ENCODE measurements at regions of chr4 and their contacts with region 1.

Region 1: GRCh38 chr4:77433418-77433733 is 172.2 kb upstream of the CXCL13 start:
- DNase-seq: peak in 6 of 9 donors; percentile 20 to 47 (median 30)
- ATAC-seq: peak; percentile 69
- H3K4me3 ChIP-seq: no peak overlapping the region
- H3K4me3 Mint-ChIP-seq: peak overlapping the region in 3 of 10 donors; percentile 19 to 46 (median 32)
- H3K27ac ChIP-seq: no peak overlapping the region
- H3K27ac Mint-ChIP-seq: no peak overlapping the region
- H3K4me1 ChIP-seq: no peaks in the 10 kb centered on the region
- H3K4me1 Mint-ChIP-seq: peaks cover 0 to 9% (median 4%) of the 10 kb centered on the region in 7 donors
- H3K27me3 ChIP-seq: no peaks in the 10 kb centered on the region
- H3K27me3 Mint-ChIP-seq: peaks cover 0 to 4% (median 0%) of the 10 kb centered on the region in 5 donors

Region 2: DNA sequence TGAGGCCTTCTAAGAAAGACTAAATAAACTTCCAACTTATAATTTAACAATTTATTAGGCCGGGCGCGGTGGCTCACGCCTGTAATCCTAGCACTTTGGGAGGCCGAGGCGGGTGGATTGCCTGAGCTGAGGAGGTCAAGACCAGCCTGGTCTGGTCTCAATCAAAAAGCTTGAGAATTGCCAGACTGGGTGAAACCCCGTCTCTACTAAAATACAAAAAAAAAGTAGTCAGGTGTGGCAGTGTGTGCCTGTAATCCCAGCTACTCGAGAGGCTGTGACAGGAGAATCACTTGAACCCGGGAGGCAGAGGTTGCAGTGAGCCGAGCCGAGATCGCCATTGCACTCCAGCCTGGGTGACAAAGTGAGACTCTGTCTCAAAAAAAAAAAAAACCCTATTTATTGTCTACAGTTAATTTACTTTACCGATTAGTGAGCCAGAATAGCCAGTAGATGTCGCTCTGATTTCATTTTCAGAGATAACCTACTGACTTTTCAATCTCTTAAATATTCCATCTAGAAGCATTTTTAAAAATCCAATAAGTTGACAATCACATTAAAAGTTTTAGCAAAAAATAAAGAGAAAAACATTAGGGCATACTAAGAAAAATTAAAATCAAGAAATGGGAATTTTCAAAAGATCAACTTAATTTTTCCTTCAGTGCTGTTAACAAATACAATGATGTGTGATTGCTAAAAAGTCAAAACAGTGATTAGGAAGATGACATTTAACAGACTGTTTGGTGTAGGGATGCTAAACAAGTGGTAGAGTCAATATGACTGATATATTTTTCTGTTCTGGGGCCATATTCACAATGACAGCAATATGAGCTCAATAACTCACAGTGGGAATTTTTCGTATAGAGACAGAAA is 1002.6 kb before region 1 on chr4:
- CTCF ChIA-PET with region 1: no interaction called
- POLR2A ChIA-PET with region 1: no interaction called
- intact Hi-C with region 1: loop called in 1 of 2 experiments (anchors 2 kb)
- DNase-seq: peak in 3 of 9 donors; percentile 17 to 32 (median 18)
- ATAC-seq: no peak
- H3K4me3 ChIP-seq: no peak overlapping the region
- H3K4me3 Mint-ChIP-seq: no peak overlapping the region
- H3K27ac ChIP-seq: no peak overlapping the region
- H3K27ac Mint-ChIP-seq: no peak overlapping the region
- H3K4me1 ChIP-seq: no peaks in the 10 kb centered on the region
- H3K4me1 Mint-ChIP-seq: peaks cover 0 to 4% (median 0%) of the 10 kb centered on the region in 7 donors
- H3K27me3 ChIP-seq: no peaks in the 10 kb centered on the region
- H3K27me3 Mint-ChIP-seq: peaks cover 20 to 37% (median 22%) of the 10 kb centered on the region in 5 donors

Region 3: GRCh38 chr4:77052352-77052751 is 381.0 kb before region 1 on chr4:
- CTCF ChIA-PET with region 1: no interaction called
- POLR2A ChIA-PET with region 1: no interaction called
- intact Hi-C with region 1: loop called in 1 of 2 experiments (anchors 5 kb)
- DNase-seq: peak in 7 of 9 donors; percentile 18 to 59 (median 42)
- ATAC-seq: peak; percentile 74
- H3K4me3 ChIP-seq: no peak overlapping the region
- H3K4me3 Mint-ChIP-seq: no peak overlapping the region
- H3K27ac ChIP-seq: no peak overlapping the region
- H3K27ac Mint-ChIP-seq: peak overlapping the region in 6 of 9 donors; percentile 14 to 83 (median 70)
- H3K4me1 ChIP-seq: no peaks in the 10 kb centered on the region
- H3K4me1 Mint-ChIP-seq: peaks cover 0 to 19% (median 9%) of the 10 kb centered on the region in 7 donors
- H3K27me3 ChIP-seq: no peaks in the 10 kb centered on the region
- H3K27me3 Mint-ChIP-seq: no peaks in the 10 kb centered on the region

Region 4: DNA sequence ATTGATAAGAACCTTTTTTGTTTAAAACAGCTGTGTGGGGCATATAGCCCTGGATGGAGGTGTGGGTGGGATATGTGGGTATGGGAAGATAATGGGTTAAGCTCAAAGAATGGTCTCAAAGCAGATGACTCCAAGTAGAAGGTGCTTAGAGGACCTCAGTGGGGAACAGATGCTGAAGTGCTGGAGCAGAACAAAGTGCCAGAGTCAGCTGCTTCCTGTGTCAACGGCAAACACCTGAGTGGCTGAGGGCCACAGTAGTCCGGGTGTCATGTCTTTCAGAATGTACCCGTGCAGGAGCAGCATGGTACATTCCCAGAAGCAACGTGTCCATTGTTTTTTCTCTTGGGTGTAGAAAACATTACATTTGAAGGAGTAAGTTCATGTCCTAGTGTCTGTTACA is 65.7 kb before region 1 on chr4:
- CTCF ChIA-PET with region 1: no interaction called
- POLR2A ChIA-PET with region 1: no interaction called
- intact Hi-C with region 1: loop called in 1 of 2 experiments (anchors 1 kb)
- DNase-seq: no peak
- ATAC-seq: no peak
- H3K4me3 ChIP-seq: no peak overlapping the region
- H3K4me3 Mint-ChIP-seq: no peak overlapping the region
- H3K27ac ChIP-seq: no peak overlapping the region
- H3K27ac Mint-ChIP-seq: no peak overlapping the region
- H3K4me1 ChIP-seq: no peaks in the 10 kb centered on the region
- H3K4me1 Mint-ChIP-seq: no peaks in the 10 kb centered on the region
- H3K27me3 ChIP-seq: no peaks in the 10 kb centered on the region
- H3K27me3 Mint-ChIP-seq: peaks cover 0 to 20% (median 7%) of the 10 kb centered on the region in 5 donors

Measured in naive thymus-derived CD4-positive, alpha-beta T cell (primary cell).